BJ (cell line): ENCODE measurements at regions of chr6 and their contacts with region 1.

Region 1: GRCh38 chr6:31580807-31581433 is 1.3 kb downstream of the LTB start:
- DNase-seq: no peak
- H3K4me3 ChIP-seq: peak overlapping the region; percentile 75
- H3K27me3 ChIP-seq: no peaks in the 10 kb centered on the region
- CTCF ChIP-seq: peak; percentile 88

Region 2: GRCh38 chr6:31559958-31560696 is 20.8 kb before region 1 on chr6:
- CTCF ChIA-PET with region 1: interaction called, 18 read pairs
- POLR2A ChIA-PET with region 1: no interaction called
- DNase-seq: no peak
- H3K4me3 ChIP-seq: no peak overlapping the region
- H3K27me3 ChIP-seq: no peaks in the 10 kb centered on the region
- CTCF ChIP-seq: no peak

Region 3: DNA sequence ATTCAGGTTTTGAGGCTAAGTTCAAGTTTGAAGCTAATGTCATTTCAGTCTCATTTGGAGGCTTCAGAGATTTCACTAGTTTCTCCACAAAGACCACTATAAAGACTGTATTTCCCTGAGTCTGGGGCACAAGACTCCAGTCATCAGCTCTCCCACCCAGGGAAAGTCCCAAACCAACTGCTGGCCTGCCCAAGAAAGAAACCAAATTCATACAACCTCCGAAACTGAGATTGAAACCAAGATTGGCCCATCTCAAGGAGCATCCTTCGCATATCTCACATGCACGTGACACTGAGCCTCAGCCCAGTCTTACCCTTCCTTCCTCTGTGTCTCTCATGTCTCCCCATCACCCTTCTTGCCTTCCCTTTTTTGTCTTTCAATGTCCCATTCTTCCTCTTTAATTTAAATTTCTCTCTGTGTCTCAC is 12.4 kb before region 1 on chr6:
- CTCF ChIA-PET with region 1: interaction called, 43 read pairs
- POLR2A ChIA-PET with region 1: no interaction called
- DNase-seq: no peak
- H3K4me3 ChIP-seq: no peak overlapping the region
- H3K27me3 ChIP-seq: peaks cover 1% of the 10 kb centered on the region
- CTCF ChIP-seq: no peak

Region 4: GRCh38 chr6:31763619-31763940 is 182.7 kb after region 1 on chr6:
- CTCF ChIA-PET with region 1: no interaction called
- POLR2A ChIA-PET with region 1: no interaction called
- DNase-seq: peak; percentile 39
- H3K4me3 ChIP-seq: no peak overlapping the region
- H3K27me3 ChIP-seq: no peaks in the 10 kb centered on the region
- CTCF ChIP-seq: no peak

Region 5: GRCh38 chr6:31806465-31807272 is 225.7 kb after region 1 on chr6 and contains the start of gene LSM2:
- CTCF ChIA-PET with region 1: no interaction called
- POLR2A ChIA-PET with region 1: no interaction called
- DNase-seq: peak; percentile 91
- H3K4me3 ChIP-seq: peak within 1 kb of the TSS; percentile 72
- H3K27me3 ChIP-seq: no peaks in the 10 kb centered on the region
- CTCF ChIP-seq: peak; percentile 32
- polyA plus RNA-seq, gene LSM2: 40.3 and 43.5 TPM in 2 replicates